Ascending aorta (tissue), 2 donors: ENCODE measurements at regions of chr17 and their contacts with region 1.

Region 1: GRCh38 chr17:49567871-49568694 is 7.6 kb upstream of the NXPH3 start:
- DNase-seq: peak; percentile 71 to 96
- H3K4me3 ChIP-seq: peak overlapping the region; percentile 48 to 63
- H3K27ac ChIP-seq: peak overlapping the region; percentile 83 to 87
- H3K4me1 ChIP-seq: peaks cover 7 to 32% of the 10 kb centered on the region in 2 donors
- H3K27me3 ChIP-seq: no peaks in the 10 kb centered on the region
- CTCF ChIP-seq: peak; percentile 94 to 99 (median 96)

Region 2: GRCh38 chr17:49494937-49495841 is 72.9 kb before region 1 on chr17 and contains the start of gene NGFR:
- intact Hi-C with region 1: no loop called
- DNase-seq: no peak
- H3K4me3 ChIP-seq: peak within 1 kb of the TSS; percentile 66 to 67
- H3K27ac ChIP-seq: peak within 1 kb of the TSS in 1 of 2 donors; percentile 48
- H3K4me1 ChIP-seq: peaks cover 6 to 29% of the 10 kb centered on the region in 2 donors
- H3K27me3 ChIP-seq: no peaks in the 10 kb centered on the region
- CTCF ChIP-seq: no peak
- total RNA-seq, gene NGFR: 53.0 TPM

Region 3: DNA sequence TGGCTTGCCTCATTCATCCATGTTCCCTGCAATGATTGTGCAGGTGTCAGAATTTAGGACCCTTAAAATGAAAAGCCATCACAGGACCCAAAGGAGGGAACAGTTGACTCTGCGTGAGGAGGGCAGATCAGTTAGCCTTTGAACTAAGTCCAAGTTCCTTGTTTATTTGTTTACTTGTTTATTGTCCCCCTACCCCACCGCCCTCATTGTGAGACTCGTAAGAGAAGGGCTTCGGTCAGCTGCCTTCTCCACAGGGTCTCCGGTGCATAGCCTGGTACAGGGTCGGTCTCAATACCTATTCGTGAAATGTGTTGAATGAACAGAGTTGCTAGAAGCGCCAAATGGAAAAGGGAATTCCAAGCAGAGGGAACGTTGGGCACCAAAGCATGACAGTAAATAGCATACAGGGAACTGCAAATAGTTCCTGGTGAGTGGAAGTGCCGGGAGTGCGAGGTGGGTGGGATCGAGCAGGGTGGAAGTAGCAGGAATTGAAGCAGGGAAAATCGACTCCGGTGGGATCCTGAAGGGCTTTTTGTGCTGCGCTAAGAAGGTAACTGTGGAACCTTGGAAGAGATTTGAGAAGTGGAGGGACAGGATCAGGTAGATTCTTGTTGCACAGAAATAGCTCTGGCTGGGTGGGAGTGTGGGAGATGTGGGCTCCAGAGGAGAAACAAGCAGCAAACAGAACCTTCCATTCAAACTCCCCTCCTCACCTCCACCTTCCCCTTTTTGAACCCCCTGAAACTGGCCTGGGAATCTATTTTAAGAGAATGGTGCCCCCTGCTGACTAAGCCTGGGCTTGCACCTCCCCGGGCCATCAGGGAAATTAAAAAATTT is 127.0 kb after region 1 on chr17:
- intact Hi-C with region 1: loop called (anchors 1 kb)
- DNase-seq: no peak
- H3K4me3 ChIP-seq: peak overlapping the region; percentile 8 to 35
- H3K27ac ChIP-seq: peak overlapping the region; percentile 57 to 65
- H3K4me1 ChIP-seq: peaks cover 3 to 31% of the 10 kb centered on the region in 2 donors
- H3K27me3 ChIP-seq: no peaks in the 10 kb centered on the region
- CTCF ChIP-seq: peak; percentile 92 to 95 (median 95)

Region 4: DNA sequence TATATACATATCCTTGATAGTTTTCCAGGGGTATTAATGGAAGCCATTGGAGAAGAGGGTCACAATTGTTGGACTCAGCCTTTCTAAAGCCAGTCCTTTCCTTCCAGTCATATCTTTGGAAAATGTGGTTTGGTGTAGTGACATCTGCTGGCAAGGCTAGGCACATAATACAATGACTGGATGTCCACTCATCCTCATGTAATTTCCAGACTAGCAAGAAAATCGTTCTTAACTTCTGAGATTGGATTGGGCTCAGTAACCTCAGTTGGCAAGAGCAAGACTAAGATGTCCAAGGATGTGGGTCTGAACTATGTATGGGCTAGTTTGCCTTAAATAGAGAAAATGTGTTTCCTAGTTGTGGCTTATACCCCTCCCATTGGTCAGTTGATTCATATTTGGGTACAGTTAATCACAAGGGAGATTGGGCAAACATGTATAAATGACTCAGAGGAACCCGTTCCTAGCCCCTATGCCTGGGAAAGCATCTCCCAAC is 211.7 kb after region 1 on chr17:
- intact Hi-C with region 1: loop called (anchors 1 kb)
- DNase-seq: peak in 1 of 2 donors; percentile 75
- H3K4me3 ChIP-seq: no peak overlapping the region
- H3K27ac ChIP-seq: peak overlapping the region; percentile 81 to 87
- H3K4me1 ChIP-seq: peaks cover 29 to 59% of the 10 kb centered on the region in 2 donors
- H3K27me3 ChIP-seq: no peaks in the 10 kb centered on the region
- CTCF ChIP-seq: peak; percentile 48 to 72 (median 63)

Region 5: DNA sequence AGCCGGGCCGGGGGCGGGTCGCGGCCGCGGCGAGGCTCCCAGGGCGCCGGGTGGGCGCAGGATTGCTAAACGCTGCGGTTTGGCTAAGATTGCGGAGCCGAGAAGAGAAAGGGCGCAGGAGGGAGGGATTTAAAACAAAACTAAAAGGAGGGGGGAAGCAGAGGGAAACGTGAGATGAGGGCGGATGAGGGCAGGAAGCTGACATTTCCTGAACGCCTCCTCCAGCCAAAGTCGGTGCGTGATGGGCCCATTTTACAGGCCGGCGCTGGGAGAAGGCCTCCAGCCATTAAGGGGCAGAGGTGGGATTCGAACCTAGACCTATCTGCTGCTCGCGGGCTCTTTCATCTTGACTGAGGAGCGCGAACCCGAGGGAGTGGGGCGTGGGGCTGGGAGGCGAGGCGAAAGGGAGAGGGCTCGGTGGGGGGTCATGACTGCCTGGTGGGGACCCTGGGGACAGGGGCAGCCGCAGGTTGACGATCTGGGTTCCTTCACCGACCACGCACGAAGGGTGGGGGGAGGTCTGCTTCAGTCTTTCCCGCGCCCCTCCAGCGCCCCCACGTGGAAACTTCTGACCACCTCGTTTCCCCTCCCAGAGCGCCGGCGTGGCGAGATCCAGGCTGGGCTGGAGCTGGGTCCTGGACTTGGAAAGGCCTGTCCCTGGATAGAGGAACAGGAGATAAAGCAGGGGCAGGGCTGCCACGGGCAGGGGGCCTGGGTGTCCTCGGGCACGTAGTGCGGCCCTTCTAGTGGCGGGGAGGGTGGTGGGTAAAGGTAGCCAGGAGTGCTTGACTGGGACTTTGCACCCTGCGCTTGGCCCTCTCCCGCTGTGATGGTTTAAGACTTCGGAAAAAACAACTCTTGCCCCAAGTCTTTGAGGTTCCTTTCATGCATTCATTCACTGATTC is 283.6 kb after region 1 on chr17:
- intact Hi-C with region 1: loop called (anchors 1 kb)
- DNase-seq: peak in 1 of 2 donors; percentile 85
- H3K4me3 ChIP-seq: peak overlapping the region; percentile 74 to 77
- H3K27ac ChIP-seq: peak overlapping the region; percentile 29 to 37
- H3K4me1 ChIP-seq: peaks cover 0 to 6% of the 10 kb centered on the region in 2 donors
- H3K27me3 ChIP-seq: no peaks in the 10 kb centered on the region
- CTCF ChIP-seq: peak; percentile 68 to 93 (median 88)

Region 6: GRCh38 chr17:49997791-49998703 is 430.0 kb after region 1 on chr17:
- intact Hi-C with region 1: loop called (anchors 2 kb)
- DNase-seq: peak; percentile 20 to 83
- H3K4me3 ChIP-seq: no peak overlapping the region
- H3K27ac ChIP-seq: no peak overlapping the region
- H3K4me1 ChIP-seq: peaks cover 11 to 16% of the 10 kb centered on the region in 2 donors
- H3K27me3 ChIP-seq: peaks cover 30% of the 10 kb centered on the region
- CTCF ChIP-seq: peak; percentile 91 to 96 (median 92)